Lower leg skin (tissue), 4 donors: ENCODE measurements at regions of chr2 and their contacts with region 1.

Region 1: DNA sequence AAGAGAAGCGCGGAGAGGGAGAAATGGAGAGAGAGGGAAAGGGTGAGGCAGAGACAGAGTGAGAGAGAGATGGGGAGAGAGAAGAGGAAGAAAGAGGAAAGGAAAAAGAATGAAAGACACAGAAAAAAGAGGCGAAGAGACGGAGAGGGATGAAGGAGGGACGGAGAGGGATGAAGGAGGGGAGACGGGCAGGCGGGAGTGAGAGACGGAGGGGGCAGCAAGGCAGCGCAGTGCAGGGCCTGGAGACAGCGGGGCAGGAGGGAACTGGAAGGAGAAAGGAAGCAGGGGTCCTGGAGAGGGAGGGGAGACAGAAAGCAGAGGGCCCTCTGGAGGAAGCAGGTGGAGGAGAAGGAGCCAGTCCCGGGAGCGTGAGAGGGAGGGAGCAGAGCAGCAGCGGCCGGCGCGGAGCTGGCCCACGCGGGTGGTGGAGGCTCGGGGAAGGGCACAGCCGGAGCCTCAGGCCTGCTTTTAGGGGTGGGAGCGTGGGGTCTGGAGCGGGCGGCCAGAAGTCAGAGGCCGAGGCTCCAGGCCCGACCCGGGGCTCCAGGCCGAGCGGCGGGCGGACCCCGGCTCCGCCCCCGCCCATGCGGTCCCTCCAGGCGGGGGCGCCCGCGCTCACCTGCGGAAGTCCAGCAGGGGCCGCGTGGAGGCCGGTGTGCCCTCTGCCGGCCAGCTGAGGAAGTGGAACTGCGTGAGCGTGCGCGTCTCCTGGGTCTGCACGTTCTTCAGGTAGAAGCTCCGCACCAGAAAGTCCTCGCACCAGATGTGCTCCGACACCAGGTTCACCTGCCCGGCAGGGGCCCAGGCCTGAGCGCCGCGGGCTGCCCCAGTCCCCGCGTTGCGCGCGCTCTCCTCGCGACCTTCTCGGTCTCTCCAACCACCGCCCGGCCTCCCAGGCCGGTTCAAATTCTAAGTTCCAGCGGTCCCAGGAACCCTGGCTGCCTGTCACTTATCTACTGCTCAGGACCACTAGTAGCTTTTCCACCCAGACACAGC is 14.5 kb downstream of the PTPRN start:
- DNase-seq: peak; percentile 73 to 97
- H3K4me3 ChIP-seq: no peak overlapping the region
- CTCF ChIP-seq: peak in 2 of 3 donors; percentile 25 to 95
- POLR2A ChIP-seq: no peak

Region 2: DNA sequence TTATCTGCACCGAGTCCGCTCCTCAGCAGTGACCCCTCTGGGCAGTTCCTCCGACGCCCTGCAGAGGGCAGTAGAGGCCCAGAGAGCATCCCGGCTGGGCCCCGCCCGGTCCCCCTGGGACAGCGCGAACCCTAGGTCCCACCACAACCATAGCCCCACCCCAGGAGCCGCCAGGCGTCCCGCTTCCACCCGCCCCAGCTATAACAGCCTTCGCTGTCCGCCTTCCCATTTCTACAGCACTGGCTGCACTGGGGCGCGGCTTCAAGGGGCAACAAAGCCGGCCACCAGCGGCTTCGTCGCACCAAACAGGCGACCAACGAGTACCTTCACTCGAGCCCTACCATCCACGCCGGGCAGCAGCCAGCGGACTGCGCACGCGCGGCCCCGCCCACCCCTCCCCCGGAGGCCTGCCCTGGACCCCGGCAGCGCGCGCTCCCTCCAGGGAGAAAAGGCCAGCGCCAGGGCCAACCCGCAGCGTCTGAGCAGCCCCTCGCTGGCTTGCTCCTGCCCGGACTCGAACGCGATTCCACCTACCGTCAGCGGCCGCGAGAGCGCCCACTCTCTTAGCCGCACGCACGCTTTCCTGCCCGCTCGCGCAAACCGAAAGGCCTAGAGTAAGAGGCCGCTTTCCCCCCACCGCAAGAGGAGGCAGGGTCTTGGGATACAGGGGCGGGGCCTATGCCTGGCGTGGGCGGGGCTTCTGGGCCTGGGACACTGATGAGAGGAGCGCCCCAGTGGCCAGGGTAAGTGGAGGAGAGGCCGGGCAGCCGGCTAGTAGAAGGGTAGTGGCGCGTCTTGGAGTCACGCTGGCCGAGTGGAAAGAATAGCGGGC is 134.3 kb before region 1 on chr2 and contains the start of gene NHEJ1:
- intact Hi-C with region 1: loop called (anchors 5 kb)
- DNase-seq: peak; percentile 96 to 99
- H3K4me3 ChIP-seq: peak within 1 kb of the TSS; percentile 19
- CTCF ChIP-seq: peak in 1 of 3 donors; percentile 96
- POLR2A ChIP-seq: no peak
- total RNA-seq, gene NHEJ1: 13.2 to 20.9 (median 18.4) TPM

Region 3: DNA sequence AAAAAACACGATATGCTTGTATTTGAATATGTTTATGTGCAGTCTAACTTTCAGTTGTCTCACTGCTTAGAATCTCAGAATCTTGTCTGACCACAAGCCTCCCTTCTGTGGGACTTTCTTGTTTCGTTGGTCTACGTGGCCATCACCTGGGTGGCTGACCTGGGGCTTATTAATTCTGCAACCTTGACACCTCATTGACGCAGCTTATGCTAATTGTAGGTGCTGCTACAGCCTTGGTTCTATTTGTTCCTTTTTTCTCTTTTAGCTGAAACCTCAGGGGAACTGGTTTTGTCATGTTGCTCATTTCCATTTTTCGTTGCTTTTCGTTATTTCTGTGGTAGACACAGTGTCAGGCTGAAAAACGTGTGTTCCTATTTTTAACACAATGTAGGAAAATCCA is 606.5 kb after region 1 on chr2:
- intact Hi-C with region 1: no loop called
- DNase-seq: no peak
- H3K4me3 ChIP-seq: no peak overlapping the region
- CTCF ChIP-seq: no peak
- POLR2A ChIP-seq: no peak